ENCODE measurements at regions of chr1 and their contacts with region 1.

Region 1: GRCh38 chr1:91929250-91929649 is 20.0 kb upstream of the BRDT start:
- DNase-seq: no peak
- H3K4me3 ChIP-seq: no peak overlapping the region
- H3K27ac ChIP-seq: no peak overlapping the region
- H3K4me1 ChIP-seq: no peaks in the 10 kb centered on the region
- H3K27me3 ChIP-seq: no peaks in the 10 kb centered on the region
- CTCF ChIP-seq: no peak
- EP300 ChIP-seq: no peak
- POLR2A ChIP-seq: no peak
- RAD21 ChIP-seq: no peak

Region 2: GRCh38 chr1:91944087-91944486 is 14.8 kb after region 1 on chr1:
- CTCF ChIA-PET with region 1: interaction called, 10 read pairs
- POLR2A ChIA-PET with region 1: interaction called, 3 read pairs
- DNase-seq: no peak
- H3K4me3 ChIP-seq: no peak overlapping the region
- H3K27ac ChIP-seq: no peak overlapping the region
- H3K4me1 ChIP-seq: peaks cover 0 to 4% (median 0%) of the 10 kb centered on the region in 4 experiments; a peak in 1 of 7 replicates
- H3K27me3 ChIP-seq: no peaks in the 10 kb centered on the region
- CTCF ChIP-seq: no peak
- EP300 ChIP-seq: no peak
- POLR2A ChIP-seq: no peak
- RAD21 ChIP-seq: no peak

Region 3: DNA sequence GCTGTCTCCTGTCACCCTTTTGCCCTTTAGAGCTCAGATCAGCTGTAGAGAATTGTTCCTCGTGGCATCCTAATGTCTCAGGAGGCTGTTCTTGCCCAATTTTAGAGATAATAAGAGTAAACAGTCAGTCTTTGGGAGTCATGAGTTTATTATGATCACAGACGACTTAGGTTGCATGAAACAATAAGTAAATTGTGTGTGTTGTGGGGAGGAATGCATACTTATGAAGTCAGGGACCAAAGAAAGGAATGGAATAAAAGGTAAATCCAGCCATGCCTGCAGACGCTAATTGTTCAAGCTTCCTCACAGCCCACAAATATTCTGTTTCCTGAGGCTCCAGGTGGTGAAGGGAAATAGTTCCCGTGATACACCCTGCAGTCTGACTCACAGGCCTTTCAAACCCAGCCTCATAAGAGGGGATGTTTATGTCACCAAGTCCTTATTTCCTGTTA is 101.4 kb after region 1 on chr1:
- CTCF ChIA-PET with region 1: no interaction called
- POLR2A ChIA-PET with region 1: no interaction called
- DNase-seq: no peak
- H3K4me3 ChIP-seq: peak overlapping the region; percentile 64 to 77 (median 68); a peak in 7 of 8 replicates
- H3K27ac ChIP-seq: no peak overlapping the region
- H3K4me1 ChIP-seq: peaks cover 3 to 7% (median 4%) of the 10 kb centered on the region in 4 experiments
- H3K27me3 ChIP-seq: peaks cover 0 to 9% (median 7%) of the 10 kb centered on the region in 4 experiments; a peak in 5 of 7 replicates
- CTCF ChIP-seq: no peak
- EP300 ChIP-seq: no peak
- POLR2A ChIP-seq: no peak
- RAD21 ChIP-seq: no peak

Region 4: GRCh38 chr1:92843429-92844352 is 914.4 kb after region 1 on chr1:
- CTCF ChIA-PET with region 1: no interaction called
- POLR2A ChIA-PET with region 1: no interaction called
- DNase-seq: no peak
- H3K4me3 ChIP-seq: no peak overlapping the region
- H3K27ac ChIP-seq: no peak overlapping the region
- H3K4me1 ChIP-seq: no peaks in the 10 kb centered on the region
- H3K27me3 ChIP-seq: no peaks in the 10 kb centered on the region
- CTCF ChIP-seq: no peak
- EP300 ChIP-seq: no peak
- POLR2A ChIP-seq: peak; percentile 1 to 49; a peak in 2 of 3 replicates
- RAD21 ChIP-seq: no peak

Measured in H1 (cell line).